ENCODE measurements at regions of chr1 and their contacts with region 1.

Region 1: DNA sequence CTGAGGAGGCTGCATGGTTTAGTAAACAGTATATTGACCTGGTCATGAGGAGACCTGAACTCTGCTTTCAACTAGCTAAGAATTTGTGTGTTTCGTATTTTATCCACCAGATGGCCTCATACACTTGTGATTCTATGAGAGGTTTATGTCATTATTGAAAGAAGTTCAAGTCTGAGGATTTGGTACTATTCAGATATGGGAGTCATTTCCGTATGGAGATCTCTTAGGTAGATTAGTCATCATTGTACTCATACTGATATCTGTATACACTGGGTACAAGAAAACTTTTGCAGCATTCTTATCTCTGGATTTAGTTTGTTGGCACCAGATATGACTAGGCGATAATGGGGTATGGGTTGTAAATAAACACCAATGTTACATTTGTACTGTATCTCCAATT is 26.6 kb downstream of the ATF6 start:
- DNase-seq: peak in 2 of 9 experiments; percentile 47 to 62
- ATAC-seq: peak; percentile 62
- H3K4me3 ChIP-seq: no peak overlapping the region
- H3K4me3 Mint-ChIP-seq: no peak overlapping the region
- H3K27ac ChIP-seq: no peak overlapping the region
- H3K27ac Mint-ChIP-seq: no peak overlapping the region
- H3K4me1 ChIP-seq: no peaks in the 10 kb centered on the region
- H3K4me1 Mint-ChIP-seq: peaks cover 2% of the 10 kb centered on the region
- H3K27me3 ChIP-seq: no peaks in the 10 kb centered on the region
- H3K27me3 Mint-ChIP-seq: no peaks in the 10 kb centered on the region
- CTCF ChIP-seq: peak; percentile 46

Region 2: GRCh38 chr1:161725258-161726082 is 67.3 kb before region 1 on chr1:
- CTCF ChIA-PET with region 1: no interaction called
- POLR2A ChIA-PET with region 1: no interaction called
- intact Hi-C with region 1: no loop called
- DNase-seq: peak in 7 of 9 experiments; percentile 17 to 67 (median 39)
- ATAC-seq: peak; percentile 6
- H3K4me3 ChIP-seq: peak overlapping the region; percentile 65 to 92
- H3K4me3 Mint-ChIP-seq: peak overlapping the region; percentile 95
- H3K27ac ChIP-seq: peak overlapping the region; percentile 29 to 51
- H3K27ac Mint-ChIP-seq: peak overlapping the region; percentile 91
- H3K4me1 ChIP-seq: peaks cover 27% of the 10 kb centered on the region
- H3K4me1 Mint-ChIP-seq: peaks cover 38% of the 10 kb centered on the region
- H3K27me3 ChIP-seq: no peaks in the 10 kb centered on the region
- H3K27me3 Mint-ChIP-seq: no peaks in the 10 kb centered on the region
- CTCF ChIP-seq: no peak

Region 3: DNA sequence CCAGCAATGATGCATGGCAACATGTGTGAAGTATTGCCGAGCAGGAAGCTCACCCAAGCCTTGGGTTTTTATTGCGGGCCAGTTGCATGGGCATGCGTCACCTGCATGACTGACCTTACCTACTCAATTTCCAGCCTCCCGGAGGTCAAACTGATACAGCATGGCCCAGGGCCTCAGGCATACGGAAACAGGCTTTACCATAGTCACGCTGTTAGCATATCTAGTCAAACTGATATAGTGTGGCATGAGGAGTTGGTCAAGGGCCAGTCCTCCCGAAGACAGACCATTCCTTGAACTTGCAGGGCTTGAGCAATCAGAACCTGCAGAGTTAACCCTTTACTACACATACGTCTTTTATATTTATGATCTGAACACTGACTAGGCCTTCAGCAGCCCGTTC is 49.5 kb before region 1 on chr1:
- CTCF ChIA-PET with region 1: no interaction called
- POLR2A ChIA-PET with region 1: no interaction called
- intact Hi-C with region 1: no loop called
- DNase-seq: no peak
- ATAC-seq: no peak
- H3K4me3 ChIP-seq: no peak overlapping the region
- H3K4me3 Mint-ChIP-seq: no peak overlapping the region
- H3K27ac ChIP-seq: no peak overlapping the region
- H3K27ac Mint-ChIP-seq: no peak overlapping the region
- H3K4me1 ChIP-seq: peaks cover 24% of the 10 kb centered on the region
- H3K4me1 Mint-ChIP-seq: peaks cover 34% of the 10 kb centered on the region
- H3K27me3 ChIP-seq: no peaks in the 10 kb centered on the region
- H3K27me3 Mint-ChIP-seq: peaks cover 7% of the 10 kb centered on the region
- CTCF ChIP-seq: no peak

Region 4: GRCh38 chr1:162035241-162035640 is 242.5 kb after region 1 on chr1:
- CTCF ChIA-PET with region 1: interaction called, 136 read pairs
- POLR2A ChIA-PET with region 1: interaction called, 3 read pairs
- intact Hi-C with region 1: loop called (anchors 1 kb)
- DNase-seq: no peak
- ATAC-seq: no peak
- H3K4me3 ChIP-seq: no peak overlapping the region
- H3K4me3 Mint-ChIP-seq: no peak overlapping the region
- H3K27ac ChIP-seq: no peak overlapping the region
- H3K27ac Mint-ChIP-seq: no peak overlapping the region
- H3K4me1 ChIP-seq: no peaks in the 10 kb centered on the region
- H3K4me1 Mint-ChIP-seq: peaks cover 4% of the 10 kb centered on the region
- H3K27me3 ChIP-seq: no peaks in the 10 kb centered on the region
- H3K27me3 Mint-ChIP-seq: peaks cover 11% of the 10 kb centered on the region
- CTCF ChIP-seq: no peak

Region 5: DNA sequence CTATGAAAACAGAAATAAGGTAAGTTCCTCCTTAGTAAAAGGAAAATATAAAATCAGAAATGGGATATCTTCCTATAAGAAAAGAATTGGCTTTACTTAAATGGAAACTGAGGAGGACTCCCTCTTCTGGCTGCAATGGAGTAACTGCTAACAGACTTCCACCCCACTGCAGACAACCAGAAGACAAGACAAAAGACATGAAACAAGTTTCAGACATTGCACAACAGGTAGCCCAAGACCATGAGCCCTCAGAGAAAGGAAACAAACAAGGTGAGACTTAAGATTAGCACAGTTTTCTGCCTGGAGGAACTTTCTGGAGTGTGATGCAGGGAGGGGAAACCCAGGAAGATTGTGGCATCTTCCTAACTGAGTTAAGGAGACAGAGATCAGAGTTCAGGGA is 247.9 kb after region 1 on chr1:
- CTCF ChIA-PET with region 1: interaction called, 136 read pairs
- POLR2A ChIA-PET with region 1: interaction called, 3 read pairs
- intact Hi-C with region 1: loop called (anchors 1 kb)
- DNase-seq: no peak
- ATAC-seq: no peak
- H3K4me3 ChIP-seq: no peak overlapping the region
- H3K4me3 Mint-ChIP-seq: no peak overlapping the region
- H3K27ac ChIP-seq: no peak overlapping the region
- H3K27ac Mint-ChIP-seq: no peak overlapping the region
- H3K4me1 ChIP-seq: no peaks in the 10 kb centered on the region
- H3K4me1 Mint-ChIP-seq: peaks cover 2% of the 10 kb centered on the region
- H3K27me3 ChIP-seq: no peaks in the 10 kb centered on the region
- H3K27me3 Mint-ChIP-seq: peaks cover 17% of the 10 kb centered on the region
- CTCF ChIP-seq: no peak

Region 6: DNA sequence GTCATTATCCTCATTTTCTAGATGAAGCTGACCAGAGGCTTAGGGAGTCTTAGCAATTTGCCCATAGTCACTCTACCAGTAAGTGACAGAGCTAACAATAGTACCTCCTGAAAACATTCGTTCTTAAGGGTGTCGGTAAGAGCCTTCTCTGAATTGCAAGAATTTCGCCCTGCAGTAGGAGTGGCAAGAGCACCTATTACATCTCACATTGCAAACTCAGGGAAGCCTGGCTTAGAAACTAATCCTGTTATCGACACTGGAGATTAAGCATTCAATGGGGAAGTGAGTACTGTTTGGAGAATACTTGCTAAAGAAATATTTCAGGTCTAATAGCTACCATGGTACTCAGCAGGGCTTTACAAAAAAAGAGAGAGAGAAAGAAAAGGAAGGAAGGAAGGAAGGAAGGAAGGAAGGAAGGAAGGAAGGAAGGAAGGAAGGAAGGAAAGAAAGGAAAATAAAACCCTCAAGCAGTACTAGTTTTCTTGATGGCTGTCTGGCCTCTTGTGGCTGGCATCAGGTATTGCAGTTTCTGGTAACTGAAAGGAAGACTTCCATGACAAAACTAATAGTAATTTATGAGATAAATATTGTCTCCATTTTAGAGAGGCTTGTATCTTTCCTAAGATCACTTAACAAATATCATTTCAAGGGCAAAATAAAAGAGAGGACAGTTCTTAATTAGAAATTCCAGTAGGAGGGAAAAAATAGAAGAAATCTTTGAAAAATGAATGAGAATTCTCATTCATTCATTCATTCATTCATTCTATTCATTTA is 599.2 kb after region 1 on chr1:
- CTCF ChIA-PET with region 1: no interaction called
- POLR2A ChIA-PET with region 1: no interaction called
- intact Hi-C with region 1: loop called (anchors 5 kb)
- DNase-seq: peak in 2 of 9 experiments; percentile 31 to 46
- ATAC-seq: no peak
- H3K4me3 ChIP-seq: no peak overlapping the region
- H3K4me3 Mint-ChIP-seq: no peak overlapping the region
- H3K27ac ChIP-seq: no peak overlapping the region
- H3K27ac Mint-ChIP-seq: no peak overlapping the region
- H3K4me1 ChIP-seq: no peaks in the 10 kb centered on the region
- H3K4me1 Mint-ChIP-seq: peaks cover 3% of the 10 kb centered on the region
- H3K27me3 ChIP-seq: no peaks in the 10 kb centered on the region
- H3K27me3 Mint-ChIP-seq: peaks cover 8% of the 10 kb centered on the region
- CTCF ChIP-seq: peak; percentile 64

Measured in CD8-positive, alpha-beta T cell (primary cell).